ENCODE measurements at regions of chr2 and their contacts with region 1.

Region 1: GRCh38 chr2:64330281-64331113 is 123.5 kb upstream of the LGALSL start:
- DNase-seq: peak; percentile 70 to 79 (median 74)
- H3K4me3 ChIP-seq: no peak overlapping the region
- H3K4me3 Mint-ChIP-seq: peak overlapping the region in 7 of 8 donors; percentile 25 to 83 (median 75)
- H3K27ac ChIP-seq: no peak overlapping the region
- H3K27ac Mint-ChIP-seq: peak overlapping the region in 6 of 7 donors; percentile 33 to 92 (median 86)
- H3K4me1 ChIP-seq: peaks cover 38% of the 10 kb centered on the region
- H3K4me1 Mint-ChIP-seq: peaks cover 28 to 46% (median 34%) of the 10 kb centered on the region in 4 donors
- H3K27me3 ChIP-seq: no peaks in the 10 kb centered on the region
- H3K27me3 Mint-ChIP-seq: no peaks in the 10 kb centered on the region

Region 2: DNA sequence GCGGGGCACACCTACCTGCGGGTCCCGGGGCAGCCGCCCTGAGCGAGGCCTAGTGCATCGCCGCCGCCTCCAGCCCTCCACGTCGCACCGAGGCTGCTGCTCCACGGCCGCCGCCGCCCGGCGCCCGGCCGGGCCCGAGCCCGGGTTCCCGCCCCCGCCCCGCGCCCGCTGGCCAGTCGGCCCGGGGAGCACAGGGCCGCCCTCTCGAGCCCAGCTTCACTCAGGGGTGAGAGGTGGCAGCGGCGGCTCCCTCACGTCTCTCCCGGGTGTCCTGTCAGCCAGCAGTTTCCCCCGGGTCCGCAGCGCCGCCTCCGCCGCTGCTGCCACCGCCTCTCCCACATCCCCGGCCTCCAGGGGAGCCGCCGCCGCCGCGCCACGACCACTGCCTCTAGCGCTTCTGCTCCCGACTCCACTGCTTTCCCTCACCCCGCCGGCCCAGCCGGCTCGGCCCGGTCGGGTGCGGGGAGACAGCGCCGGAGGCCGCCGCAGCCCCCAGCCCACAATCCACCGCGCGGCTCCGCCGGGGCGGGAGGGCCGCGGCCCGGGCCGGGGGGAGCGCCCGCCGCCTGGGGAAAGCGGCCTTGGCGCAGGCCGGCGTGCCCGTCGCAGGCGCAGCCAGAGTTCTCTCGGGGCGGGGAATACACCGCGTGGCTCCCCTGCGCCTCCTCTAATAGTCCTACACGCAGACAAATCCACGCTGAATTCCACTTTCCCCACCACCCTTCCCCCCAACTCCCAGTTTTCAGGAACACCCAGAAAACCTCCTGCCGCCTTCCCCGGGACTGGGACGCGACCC is 311.4 kb before region 1 on chr2 and contains the start of gene VPS54:
- CTCF ChIA-PET with region 1: interaction called, 12 read pairs
- POLR2A ChIA-PET with region 1: interaction called, 7 read pairs
- intact Hi-C with region 1: no loop called
- DNase-seq: peak; percentile 59 to 74 (median 63)
- H3K4me3 ChIP-seq: peak within 1 kb of the TSS; percentile 51 to 58
- H3K4me3 Mint-ChIP-seq: peak within 1 kb of the TSS; percentile 98 to 99 (median 99)
- H3K27ac ChIP-seq: peak within 1 kb of the TSS; percentile 72
- H3K27ac Mint-ChIP-seq: peak within 1 kb of the TSS; percentile 94 to 99 (median 98)
- H3K4me1 ChIP-seq: peaks cover 55% of the 10 kb centered on the region
- H3K4me1 Mint-ChIP-seq: peaks cover 34 to 51% (median 42%) of the 10 kb centered on the region in 4 donors
- H3K27me3 ChIP-seq: no peaks in the 10 kb centered on the region
- H3K27me3 Mint-ChIP-seq: no peaks in the 10 kb centered on the region
- total RNA-seq, gene VPS54: 15.2 to 16.4 TPM

Region 3: DNA sequence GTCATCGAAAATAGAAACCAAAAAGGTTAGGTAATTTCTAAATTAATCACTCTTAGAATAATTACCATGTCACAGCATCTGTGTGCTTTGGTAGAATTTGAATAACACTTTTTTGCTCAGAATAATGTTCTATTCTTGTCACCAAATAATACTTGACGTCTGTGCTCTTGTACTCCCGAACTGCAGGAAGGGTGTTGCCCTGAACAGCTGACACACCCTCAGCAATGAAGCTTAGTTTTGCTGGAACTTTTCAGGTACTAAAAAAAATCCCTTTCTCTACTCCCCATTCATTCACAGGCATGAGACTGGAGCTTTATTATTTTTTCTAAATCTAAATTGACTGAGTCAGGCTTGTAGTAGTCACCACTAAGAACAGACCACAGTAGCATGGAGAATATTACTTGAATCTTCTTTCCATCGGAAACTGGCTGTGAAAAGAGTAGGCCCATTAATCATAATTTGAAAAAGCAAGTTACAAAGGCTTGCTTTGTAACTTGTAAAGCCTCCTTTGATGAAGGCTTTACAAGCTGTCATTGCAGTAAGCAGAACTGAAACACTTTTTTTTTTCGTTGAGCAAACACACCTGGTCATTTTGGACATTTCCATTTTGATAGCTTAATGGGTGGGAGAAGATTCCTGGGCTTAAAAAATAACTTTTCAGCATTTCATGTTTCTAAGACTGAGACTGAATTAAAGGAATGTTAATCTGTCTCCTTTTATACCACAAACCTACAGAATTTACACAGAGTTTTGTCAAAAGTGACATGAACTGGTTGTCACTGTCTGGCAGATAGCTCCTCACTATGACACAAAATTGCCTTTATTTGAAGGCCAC is 116.0 kb before region 1 on chr2:
- CTCF ChIA-PET with region 1: interaction called, 15 read pairs
- POLR2A ChIA-PET with region 1: interaction called, 4 read pairs
- intact Hi-C with region 1: loop called (anchors 1 kb)
- DNase-seq: peak; percentile 63 to 76 (median 73)
- H3K4me3 ChIP-seq: peak overlapping the region in 1 of 2 donors; percentile 28
- H3K4me3 Mint-ChIP-seq: peak overlapping the region; percentile 58 to 89 (median 76)
- H3K27ac ChIP-seq: peak overlapping the region; percentile 51
- H3K27ac Mint-ChIP-seq: peak overlapping the region; percentile 87 to 94 (median 92)
- H3K4me1 ChIP-seq: peaks cover 43% of the 10 kb centered on the region
- H3K4me1 Mint-ChIP-seq: peaks cover 29 to 46% (median 42%) of the 10 kb centered on the region in 4 donors
- H3K27me3 ChIP-seq: no peaks in the 10 kb centered on the region
- H3K27me3 Mint-ChIP-seq: no peaks in the 10 kb centered on the region

Region 4: DNA sequence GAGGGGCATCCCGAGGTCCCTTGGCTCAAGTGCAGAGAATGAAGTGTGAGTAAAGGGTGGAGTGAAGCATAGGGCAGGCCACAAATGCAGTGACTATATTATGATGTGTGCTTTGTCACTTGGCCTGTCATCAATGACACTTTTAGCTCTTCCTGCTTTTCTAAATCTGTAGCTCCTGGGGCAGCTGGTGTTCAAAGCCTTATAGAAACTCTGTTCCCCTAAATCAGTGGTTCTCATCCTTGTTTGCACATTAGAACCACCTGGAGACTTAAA is 12.1 kb before region 1 on chr2:
- CTCF ChIA-PET with region 1: interaction called, 30 read pairs
- POLR2A ChIA-PET with region 1: no interaction called
- intact Hi-C with region 1: no loop called
- DNase-seq: no peak
- H3K4me3 ChIP-seq: no peak overlapping the region
- H3K4me3 Mint-ChIP-seq: no peak overlapping the region
- H3K27ac ChIP-seq: no peak overlapping the region
- H3K27ac Mint-ChIP-seq: peak overlapping the region in 1 of 7 donors; percentile 19
- H3K4me1 ChIP-seq: no peaks in the 10 kb centered on the region
- H3K4me1 Mint-ChIP-seq: peaks cover 0 to 4% (median 0%) of the 10 kb centered on the region in 4 donors
- H3K27me3 ChIP-seq: no peaks in the 10 kb centered on the region
- H3K27me3 Mint-ChIP-seq: peaks cover 0 to 1% of the 10 kb centered on the region in 2 donors

Region 5: GRCh38 chr2:64516628-64517510 is 186.4 kb after region 1 on chr2:
- CTCF ChIA-PET with region 1: interaction called, 11 read pairs
- POLR2A ChIA-PET with region 1: no interaction called
- intact Hi-C with region 1: no loop called
- DNase-seq: no peak
- H3K4me3 ChIP-seq: no peak overlapping the region
- H3K4me3 Mint-ChIP-seq: no peak overlapping the region
- H3K27ac ChIP-seq: no peak overlapping the region
- H3K27ac Mint-ChIP-seq: no peak overlapping the region
- H3K4me1 ChIP-seq: no peaks in the 10 kb centered on the region
- H3K4me1 Mint-ChIP-seq: no peaks in the 10 kb centered on the region
- H3K27me3 ChIP-seq: no peaks in the 10 kb centered on the region
- H3K27me3 Mint-ChIP-seq: peaks cover 0 to 2% of the 10 kb centered on the region in 2 donors

Region 6: DNA sequence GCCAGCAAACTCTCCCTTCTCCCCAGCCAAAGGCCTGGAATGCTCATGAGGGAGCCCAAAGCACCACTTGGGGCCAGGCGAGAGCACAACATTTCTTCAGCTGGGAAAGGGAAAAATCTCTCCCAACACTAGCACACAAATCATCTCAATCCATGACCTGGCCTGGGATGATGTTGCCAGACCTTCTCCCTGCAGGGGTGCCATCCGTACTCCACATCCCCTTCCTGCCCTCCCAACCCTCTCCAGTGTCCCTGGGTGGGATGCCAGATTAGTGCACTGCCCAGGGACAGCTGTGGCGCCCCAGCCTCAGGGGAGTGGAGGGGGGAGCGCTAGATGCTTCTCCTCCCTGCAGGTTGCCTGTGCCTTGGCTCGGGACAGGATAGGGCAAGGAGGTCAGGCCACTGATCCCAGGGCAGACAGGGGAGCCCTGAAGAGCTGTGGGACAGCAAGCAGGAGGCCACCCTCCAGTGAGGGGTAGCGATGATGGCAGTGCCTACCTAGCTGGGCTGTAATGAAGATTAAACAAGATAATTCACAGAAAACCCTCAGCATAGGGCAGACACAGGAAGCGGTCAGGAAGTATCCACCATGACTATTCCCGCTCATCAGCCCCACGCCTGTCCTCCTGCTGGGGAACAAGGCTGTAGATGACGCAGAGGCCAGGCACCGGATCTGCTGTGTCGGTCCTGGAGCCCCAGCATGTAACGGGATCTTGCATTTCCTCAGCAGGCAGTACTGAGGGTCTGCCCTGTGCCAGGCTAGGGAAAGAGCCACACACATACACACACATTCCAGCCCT is 292.1 kb after region 1 on chr2:
- CTCF ChIA-PET with region 1: no interaction called
- POLR2A ChIA-PET with region 1: no interaction called
- intact Hi-C with region 1: no loop called
- DNase-seq: no peak
- H3K4me3 ChIP-seq: no peak overlapping the region
- H3K4me3 Mint-ChIP-seq: no peak overlapping the region
- H3K27ac ChIP-seq: no peak overlapping the region
- H3K27ac Mint-ChIP-seq: peak overlapping the region in 1 of 7 donors; percentile 24
- H3K4me1 ChIP-seq: no peaks in the 10 kb centered on the region
- H3K4me1 Mint-ChIP-seq: no peaks in the 10 kb centered on the region
- H3K27me3 ChIP-seq: no peaks in the 10 kb centered on the region
- H3K27me3 Mint-ChIP-seq: no peaks in the 10 kb centered on the region

Region 7: GRCh38 chr2:64873472-64873924 is 543.0 kb after region 1 on chr2:
- CTCF ChIA-PET with region 1: interaction called, 31 read pairs
- POLR2A ChIA-PET with region 1: no interaction called
- intact Hi-C with region 1: loop called (anchors 1 kb)
- DNase-seq: peak; percentile 64 to 76 (median 68)
- H3K4me3 ChIP-seq: peak overlapping the region in 1 of 2 donors; percentile 7
- H3K4me3 Mint-ChIP-seq: peak overlapping the region in 7 of 8 donors; percentile 0 to 70 (median 31)
- H3K27ac ChIP-seq: no peak overlapping the region
- H3K27ac Mint-ChIP-seq: peak overlapping the region in 3 of 7 donors; percentile 23 to 48 (median 26)
- H3K4me1 ChIP-seq: peaks cover 8% of the 10 kb centered on the region
- H3K4me1 Mint-ChIP-seq: peaks cover 6 to 7% (median 6%) of the 10 kb centered on the region in 4 donors
- H3K27me3 ChIP-seq: no peaks in the 10 kb centered on the region
- H3K27me3 Mint-ChIP-seq: peaks cover 1 to 3% of the 10 kb centered on the region in 2 donors